PC-9 (cell line): ENCODE measurements at regions of chr5 and their contacts with region 1.

Region 1: GRCh38 chr5:77292026-77292757 is 81.7 kb downstream of the PDE8B start:
- DNase-seq: no peak
- H3K4me3 ChIP-seq: no peak overlapping the region
- H3K27ac ChIP-seq: no peak overlapping the region
- H3K4me1 ChIP-seq: no peaks in the 10 kb centered on the region
- H3K27me3 ChIP-seq: 0 out of 2 replicates have a peak, but pooled peaks cover 7% of the 10 kb centered on the region
- CTCF ChIP-seq: no peak

Region 2: GRCh38 chr5:75839547-75839946 is 1452.6 kb before region 1 on chr5:
- CTCF ChIA-PET with region 1: no interaction called
- POLR2A ChIA-PET with region 1: interaction called, 13 read pairs
- intact Hi-C with region 1: no loop called
- DNase-seq: no peak
- H3K4me3 ChIP-seq: no peak overlapping the region
- H3K27ac ChIP-seq: no peak overlapping the region
- H3K4me1 ChIP-seq: no peaks in the 10 kb centered on the region
- H3K27me3 ChIP-seq: peaks cover 6% of the 10 kb centered on the region; the same call in 1 of the 2 replicates
- CTCF ChIP-seq: no peak